ENCODE measurements at regions of chr9 and their contacts with region 1.

Region 1: DNA sequence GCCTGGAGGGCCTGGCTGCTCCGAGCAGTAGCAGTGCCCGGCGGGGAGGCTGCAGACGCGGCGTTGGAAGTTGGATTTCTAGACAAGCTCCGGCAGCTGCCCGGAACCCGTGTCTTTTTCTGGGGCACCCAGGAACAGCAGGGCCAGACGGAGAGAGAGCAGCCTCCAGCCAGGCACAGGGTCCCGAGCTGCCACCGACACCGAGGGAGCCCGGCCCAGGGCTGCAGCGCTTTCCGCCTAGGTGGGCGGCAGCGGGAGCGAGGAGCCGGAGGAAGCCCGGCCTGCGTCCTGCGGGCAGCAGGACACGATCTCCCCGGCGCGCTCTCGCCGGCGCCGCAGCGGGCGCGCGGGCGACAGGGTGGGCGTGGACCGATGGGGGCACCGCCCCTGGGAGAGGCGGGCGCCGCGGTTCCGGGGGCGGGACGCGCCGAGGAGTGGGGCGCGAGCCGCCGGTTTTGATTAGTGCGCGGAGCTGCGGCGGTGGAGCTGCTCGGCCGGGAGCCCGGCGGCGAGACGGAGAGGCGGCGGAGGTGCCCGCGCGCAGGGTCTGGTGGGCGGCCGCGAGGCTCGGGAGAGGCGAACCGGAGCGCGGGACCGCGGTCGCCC is at the start of gene UGCG:
- DNase-seq: peak; percentile 94
- ATAC-seq: peak; percentile 88
- H3K4me3 Mint-ChIP-seq: no peak within 1 kb of the TSS
- H3K27ac Mint-ChIP-seq: peak within 1 kb of the TSS; percentile 90
- H3K4me1 Mint-ChIP-seq: peaks cover 25% of the 10 kb centered on the region
- H3K27me3 Mint-ChIP-seq: no peaks in the 10 kb centered on the region
- total RNA-seq, gene UGCG: 12.7 to 14.2 TPM

Region 2: GRCh38 chr9:111483862-111484571 is 412.4 kb before region 1 on chr9 and contains the start of gene ECPAS:
- CTCF ChIA-PET with region 1: no interaction called
- POLR2A ChIA-PET with region 1: no interaction called
- intact Hi-C with region 1: loop called (anchors 2 to 5 kb)
- DNase-seq: peak; percentile 83
- ATAC-seq: peak; percentile 79
- H3K4me3 Mint-ChIP-seq: peak within 1 kb of the TSS; percentile 81
- H3K27ac Mint-ChIP-seq: peak within 1 kb of the TSS; percentile 89
- H3K4me1 Mint-ChIP-seq: peaks cover 28% of the 10 kb centered on the region
- H3K27me3 Mint-ChIP-seq: no peaks in the 10 kb centered on the region
- total RNA-seq, gene ECPAS: 78.4 to 127 TPM

Region 3: DNA sequence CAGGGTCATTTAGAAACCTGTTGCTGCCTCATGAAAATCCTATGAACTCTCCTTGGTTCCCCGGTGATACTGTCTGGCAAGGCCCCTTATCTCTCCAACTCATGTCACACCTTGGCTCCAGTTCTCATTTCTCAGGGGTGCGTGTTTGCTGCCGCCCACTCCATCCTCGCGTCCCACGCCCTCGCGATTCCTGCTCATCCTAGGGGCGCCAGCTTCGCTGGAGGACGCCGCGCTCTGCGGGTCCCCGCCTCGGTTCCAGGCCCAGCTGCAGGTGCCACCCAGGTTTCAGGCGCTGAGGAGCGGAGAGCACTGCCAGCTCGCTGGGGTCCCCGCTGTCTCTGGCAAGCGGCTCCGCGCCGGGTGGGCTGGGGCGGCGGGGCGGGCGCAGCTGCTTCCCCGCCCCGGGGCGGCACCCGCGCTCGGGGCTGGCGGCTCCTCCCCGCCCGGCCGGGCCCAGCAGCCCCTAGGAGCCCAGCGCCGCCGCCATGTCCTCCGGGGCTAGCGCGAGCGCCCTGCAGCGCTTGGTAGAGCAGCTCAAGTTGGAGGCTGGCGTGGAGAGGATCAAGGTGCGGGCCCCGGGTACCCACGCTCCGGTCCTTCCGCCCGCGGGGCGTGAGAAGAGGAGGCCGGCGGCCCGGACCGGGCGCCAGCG is 235.2 kb before region 1 on chr9 and contains the start of gene GNG10:
- CTCF ChIA-PET with region 1: interaction called, 3 read pairs
- POLR2A ChIA-PET with region 1: no interaction called
- intact Hi-C with region 1: loop called in 1 of 2 experiments (anchors 1 kb)
- DNase-seq: peak; percentile 81
- ATAC-seq: peak; percentile 92
- H3K4me3 Mint-ChIP-seq: peak within 1 kb of the TSS; percentile 98
- H3K27ac Mint-ChIP-seq: peak within 1 kb of the TSS; percentile 95
- H3K4me1 Mint-ChIP-seq: peaks cover 25% of the 10 kb centered on the region
- H3K27me3 Mint-ChIP-seq: no peaks in the 10 kb centered on the region
- total RNA-seq, gene GNG10: 14.5 to 15.4 TPM

Region 4: DNA sequence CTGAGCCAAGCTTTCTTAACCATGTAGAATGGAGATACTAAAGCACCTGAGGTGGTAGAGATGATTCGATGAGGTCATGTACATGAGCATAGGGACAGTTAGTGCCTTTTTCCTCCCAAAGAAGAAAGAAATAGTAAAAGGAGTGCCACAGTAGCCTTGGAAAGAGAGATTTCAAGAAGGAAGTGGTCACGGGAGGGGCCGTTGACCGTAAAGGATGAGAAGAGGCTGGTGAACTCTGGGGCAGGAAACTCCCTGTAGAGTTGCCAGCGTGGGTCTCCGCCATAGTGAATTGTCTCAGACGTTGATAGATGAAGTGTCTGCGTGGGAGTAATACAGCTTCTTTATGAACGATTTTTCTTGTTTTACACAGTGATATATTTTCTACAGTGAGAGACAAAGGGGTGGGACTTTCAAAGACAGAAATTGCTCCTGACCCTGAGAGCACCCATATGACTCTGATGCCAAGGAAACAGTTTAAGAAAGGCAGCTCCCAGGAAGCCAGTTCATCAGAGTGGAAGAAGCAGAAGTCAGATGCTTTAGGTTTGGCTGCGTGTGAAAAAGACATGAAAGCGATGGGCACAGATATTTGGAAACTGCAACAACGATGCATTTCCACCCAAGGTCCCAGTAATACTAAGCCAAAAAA is 41.4 kb after region 1 on chr9:
- CTCF ChIA-PET with region 1: no interaction called
- POLR2A ChIA-PET with region 1: interaction called, 4 read pairs
- intact Hi-C with region 1: loop called (anchors 2 kb)
- DNase-seq: peak; percentile 83
- ATAC-seq: peak; percentile 92
- H3K4me3 Mint-ChIP-seq: peak overlapping the region; percentile 44
- H3K27ac Mint-ChIP-seq: peak overlapping the region; percentile 86
- H3K4me1 Mint-ChIP-seq: peaks cover 23% of the 10 kb centered on the region
- H3K27me3 Mint-ChIP-seq: no peaks in the 10 kb centered on the region

Region 5: GRCh38 chr9:112074250-112075008 is 178.0 kb after region 1 on chr9:
- CTCF ChIA-PET with region 1: interaction called, 10 read pairs
- POLR2A ChIA-PET with region 1: no interaction called
- intact Hi-C with region 1: loop called (anchors 1 to 5 kb)
- DNase-seq: peak; percentile 81
- ATAC-seq: peak; percentile 85
- H3K4me3 Mint-ChIP-seq: no peak overlapping the region
- H3K27ac Mint-ChIP-seq: peak overlapping the region; percentile 72
- H3K4me1 Mint-ChIP-seq: peaks cover 35% of the 10 kb centered on the region
- H3K27me3 Mint-ChIP-seq: peaks cover 4% of the 10 kb centered on the region

Region 6: DNA sequence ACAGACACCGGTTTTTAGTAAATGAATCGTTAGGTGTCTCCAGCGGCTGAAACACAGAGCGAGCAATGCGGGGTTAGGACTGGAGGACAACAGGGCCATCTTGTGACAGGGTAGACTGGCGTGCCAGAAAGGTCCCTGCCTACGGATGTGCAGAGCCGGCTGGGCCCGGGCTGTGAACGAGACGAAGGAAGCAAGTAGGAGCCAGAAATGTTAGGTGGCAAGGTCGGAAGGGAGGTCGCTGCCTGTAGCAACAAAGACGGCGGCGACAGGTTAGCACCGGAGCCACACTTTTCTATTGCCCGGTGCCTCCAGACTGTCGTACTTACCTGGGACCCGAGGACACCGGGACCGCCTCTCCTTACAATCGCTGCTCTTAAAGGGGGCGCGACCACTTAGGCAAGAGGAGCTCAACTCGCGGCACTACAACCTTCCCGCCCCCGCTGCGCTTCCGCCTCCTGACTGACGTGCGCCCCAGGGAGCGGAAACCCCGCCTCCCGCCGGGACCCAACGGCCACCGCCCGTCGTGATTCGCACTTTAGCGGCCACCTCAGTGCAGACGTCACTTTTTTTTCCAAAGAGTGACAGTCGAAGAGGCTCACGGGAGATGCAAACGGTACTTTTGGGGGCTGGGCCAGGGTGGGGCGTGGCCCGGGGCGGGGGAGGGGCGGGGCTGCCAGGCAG is 821.3 kb after region 1 on chr9 and contains the start of gene INIP:
- CTCF ChIA-PET with region 1: no interaction called
- POLR2A ChIA-PET with region 1: no interaction called
- intact Hi-C with region 1: loop called (anchors 1 to 10 kb)
- DNase-seq: peak; percentile 99
- ATAC-seq: peak; percentile 93
- H3K4me3 Mint-ChIP-seq: peak within 1 kb of the TSS; percentile 89
- H3K27ac Mint-ChIP-seq: peak within 1 kb of the TSS; percentile 97
- H3K4me1 Mint-ChIP-seq: peaks cover 35% of the 10 kb centered on the region
- H3K27me3 Mint-ChIP-seq: no peaks in the 10 kb centered on the region
- total RNA-seq, gene INIP: 37.3 to 37.7 TPM

Measured in activated CD4-positive, alpha-beta T cell treated with anti-CD3 and anti-CD28 coated beads for 36 hours (primary cell).